ENCODE measurements at regions of chr5 and their contacts with region 1.

Region 1: GRCh38 chr5:103224118-103224893 is 34.3 kb upstream of the MACIR start:
- DNase-seq: no peak
- ATAC-seq: peak; percentile 97
- H3K4me3 Mint-ChIP-seq: no peak overlapping the region
- H3K27ac Mint-ChIP-seq: no peak overlapping the region
- H3K4me1 Mint-ChIP-seq: peaks cover 2% of the 10 kb centered on the region
- H3K27me3 Mint-ChIP-seq: peaks cover 11% of the 10 kb centered on the region
- CTCF ChIP-seq: peak; percentile 67

Region 2: DNA sequence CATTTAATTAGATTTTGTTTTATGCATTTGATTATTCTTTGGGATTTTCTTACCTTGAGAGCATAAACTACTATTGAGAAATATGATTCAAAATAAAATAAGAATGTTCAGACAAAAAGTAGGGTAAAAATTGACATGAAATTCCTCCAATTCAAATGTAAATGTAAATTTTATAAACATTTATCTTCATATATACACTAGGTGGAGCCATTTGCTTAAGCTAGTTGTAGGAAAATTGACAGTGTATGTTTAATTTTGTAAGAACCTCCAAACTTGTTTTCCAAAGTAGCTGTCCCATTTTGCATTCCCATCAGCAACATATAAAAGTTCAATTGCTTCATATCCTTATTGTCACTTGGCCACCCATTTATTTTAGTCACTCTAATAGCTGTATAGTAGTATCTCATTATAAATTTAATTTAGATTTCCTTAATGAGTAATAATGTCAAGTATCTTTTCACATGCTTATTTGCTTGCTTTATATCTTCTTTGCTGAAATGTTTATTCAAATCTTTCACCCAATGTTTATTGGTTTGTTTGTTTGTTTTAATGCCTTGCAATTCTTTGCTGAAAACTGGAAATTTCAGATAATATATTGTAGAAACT is 687.9 kb before region 1 on chr5:
- CTCF ChIA-PET with region 1: interaction called, 5 read pairs
- POLR2A ChIA-PET with region 1: no interaction called
- intact Hi-C with region 1: loop called (anchors 1 kb)
- DNase-seq: no peak
- ATAC-seq: no peak
- H3K4me3 Mint-ChIP-seq: no peak overlapping the region
- H3K27ac Mint-ChIP-seq: no peak overlapping the region
- H3K4me1 Mint-ChIP-seq: peaks cover 2% of the 10 kb centered on the region
- H3K27me3 Mint-ChIP-seq: no peaks in the 10 kb centered on the region
- CTCF ChIP-seq: no peak

Region 3: DNA sequence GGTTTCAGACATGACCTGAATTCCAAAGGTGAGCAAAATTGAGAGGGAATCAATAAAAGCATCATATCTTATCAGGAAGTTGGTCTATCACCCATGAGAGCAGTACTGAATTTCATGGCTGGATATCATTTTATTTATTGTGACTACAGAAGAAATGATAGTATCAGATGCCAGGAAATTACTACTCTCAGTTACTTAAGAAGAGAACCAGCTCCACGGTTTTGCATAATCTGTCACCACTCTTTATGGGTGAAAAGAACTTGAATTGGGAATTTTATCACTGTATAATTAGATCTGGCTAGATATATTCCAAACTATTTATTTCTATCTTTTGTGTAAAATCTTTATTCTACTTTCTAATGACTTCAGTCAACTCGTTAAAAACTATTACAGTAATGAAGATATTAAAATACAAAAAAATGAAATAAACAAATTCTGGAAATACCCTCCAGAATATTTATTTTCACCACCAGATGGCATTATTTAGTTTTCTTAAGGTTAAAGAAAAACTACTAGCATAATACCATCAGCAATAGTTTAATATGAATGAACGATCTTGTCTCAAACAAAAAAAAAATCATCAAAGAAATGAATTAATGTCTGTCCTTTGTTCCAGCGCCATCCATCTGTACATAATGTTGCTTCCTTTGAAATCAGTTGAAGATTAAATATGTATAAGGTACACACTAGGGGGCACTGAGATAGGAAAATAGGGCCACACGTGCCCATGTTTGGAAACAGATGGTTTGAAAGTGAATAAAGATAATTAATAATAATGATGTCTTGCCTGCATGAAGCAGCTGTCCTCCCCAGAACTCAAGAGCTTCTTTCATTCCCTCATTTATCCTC is 640.8 kb before region 1 on chr5:
- CTCF ChIA-PET with region 1: no interaction called
- POLR2A ChIA-PET with region 1: no interaction called
- intact Hi-C with region 1: loop called (anchors 1 kb)
- DNase-seq: no peak
- ATAC-seq: no peak
- H3K4me3 Mint-ChIP-seq: no peak overlapping the region
- H3K27ac Mint-ChIP-seq: no peak overlapping the region
- H3K4me1 Mint-ChIP-seq: peaks cover 1% of the 10 kb centered on the region
- H3K27me3 Mint-ChIP-seq: no peaks in the 10 kb centered on the region
- CTCF ChIP-seq: peak; percentile 32

Region 4: GRCh38 chr5:102691434-102691833 is 532.9 kb before region 1 on chr5:
- CTCF ChIA-PET with region 1: no interaction called
- POLR2A ChIA-PET with region 1: no interaction called
- intact Hi-C with region 1: no loop called
- DNase-seq: no peak
- ATAC-seq: no peak
- H3K4me3 Mint-ChIP-seq: no peak overlapping the region
- H3K27ac Mint-ChIP-seq: no peak overlapping the region
- H3K4me1 Mint-ChIP-seq: no peaks in the 10 kb centered on the region
- H3K27me3 Mint-ChIP-seq: peaks cover 3% of the 10 kb centered on the region
- CTCF ChIP-seq: no peak

Region 5: DNA sequence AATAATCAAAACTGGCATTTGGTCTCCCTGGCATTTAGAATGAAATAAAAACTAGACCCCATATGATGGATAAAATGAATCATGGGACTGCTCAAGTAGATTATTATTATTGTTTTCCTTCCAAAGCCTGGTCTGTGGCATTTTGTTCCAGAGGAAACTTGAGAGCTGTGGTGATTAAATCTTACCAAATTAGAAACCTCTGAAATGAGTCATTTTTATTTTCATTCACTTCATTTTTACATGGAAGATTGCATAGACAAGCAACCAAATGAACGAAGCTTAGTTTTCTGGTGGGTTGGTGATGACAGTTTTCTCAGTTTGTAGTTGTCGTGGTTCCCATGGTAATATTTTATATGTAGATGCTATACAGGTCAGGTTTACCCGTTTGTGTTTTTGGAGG is 445.8 kb before region 1 on chr5:
- CTCF ChIA-PET with region 1: interaction called, 6 read pairs
- POLR2A ChIA-PET with region 1: no interaction called
- intact Hi-C with region 1: loop called (anchors 1 kb)
- DNase-seq: no peak
- ATAC-seq: no peak
- H3K4me3 Mint-ChIP-seq: no peak overlapping the region
- H3K27ac Mint-ChIP-seq: no peak overlapping the region
- H3K4me1 Mint-ChIP-seq: peaks cover 6% of the 10 kb centered on the region
- H3K27me3 Mint-ChIP-seq: no peaks in the 10 kb centered on the region
- CTCF ChIP-seq: no peak

Region 6: GRCh38 chr5:102922799-102923477 is 301.4 kb before region 1 on chr5:
- CTCF ChIA-PET with region 1: no interaction called
- POLR2A ChIA-PET with region 1: no interaction called
- intact Hi-C with region 1: no loop called
- DNase-seq: no peak
- ATAC-seq: no peak
- H3K4me3 Mint-ChIP-seq: no peak overlapping the region
- H3K27ac Mint-ChIP-seq: no peak overlapping the region
- H3K4me1 Mint-ChIP-seq: no peaks in the 10 kb centered on the region
- H3K27me3 Mint-ChIP-seq: no peaks in the 10 kb centered on the region
- CTCF ChIP-seq: no peak

Region 7: GRCh38 chr5:103234239-103234975 is 10.1 kb after region 1 on chr5:
- CTCF ChIA-PET with region 1: no interaction called
- POLR2A ChIA-PET with region 1: no interaction called
- intact Hi-C with region 1: no loop called
- DNase-seq: no peak
- ATAC-seq: no peak
- H3K4me3 Mint-ChIP-seq: no peak overlapping the region
- H3K27ac Mint-ChIP-seq: no peak overlapping the region
- H3K4me1 Mint-ChIP-seq: no peaks in the 10 kb centered on the region
- H3K27me3 Mint-ChIP-seq: peaks cover 9% of the 10 kb centered on the region
- CTCF ChIP-seq: no peak

Region 8: GRCh38 chr5:103258368-103258956 is 34.2 kb after region 1 on chr5 and contains the start of gene MACIR:
- CTCF ChIA-PET with region 1: interaction called, 3 read pairs
- POLR2A ChIA-PET with region 1: no interaction called
- intact Hi-C with region 1: loop called (anchors 2 kb)
- DNase-seq: peak; percentile 84
- ATAC-seq: peak; percentile 94
- H3K4me3 Mint-ChIP-seq: peak within 1 kb of the TSS; percentile 88
- H3K27ac Mint-ChIP-seq: peak within 1 kb of the TSS; percentile 84
- H3K4me1 Mint-ChIP-seq: peaks cover 19% of the 10 kb centered on the region
- H3K27me3 Mint-ChIP-seq: peaks cover 2% of the 10 kb centered on the region
- CTCF ChIP-seq: no peak
- total RNA-seq, gene MACIR: 3.9 and 5.1 TPM in 2 replicates

Measured in activated B cell treated with CpG ODN at 0.5 μM for 24 hours (primary cell).